ENCODE measurements at regions of chr11 and their contacts with region 1.

Region 1: DNA sequence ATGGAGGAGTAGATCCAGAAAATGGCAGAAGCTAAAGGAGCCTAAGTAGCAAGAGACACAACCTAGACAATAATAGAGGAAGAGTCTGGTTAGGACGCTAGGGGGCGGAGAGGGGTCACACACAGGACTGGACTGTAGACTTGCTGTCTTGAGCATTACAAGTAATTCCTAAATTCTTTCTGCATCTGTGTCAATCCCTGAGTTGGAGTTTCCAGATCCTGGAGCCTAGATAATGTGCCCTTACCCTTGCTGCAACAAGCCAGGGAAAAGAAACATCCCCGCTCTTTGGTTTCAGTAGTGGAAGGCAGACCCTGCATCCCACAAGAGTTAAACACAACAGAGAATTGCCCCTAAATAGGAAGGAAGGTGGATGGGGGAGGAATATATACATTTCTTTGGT is 14.9 kb upstream of the CCDC73 start:
- DNase-seq: peak; percentile 84
- ATAC-seq: peak; percentile 100
- H3K4me3 ChIP-seq: no peak overlapping the region
- H3K27ac ChIP-seq: no peak overlapping the region
- H3K4me1 ChIP-seq: no peaks in the 10 kb centered on the region; the same call in 1 of the 2 replicates
- H3K27me3 ChIP-seq: no peaks in the 10 kb centered on the region
- CTCF ChIP-seq: peak; percentile 89

Region 2: GRCh38 chr11:32858731-32859130 is 49.4 kb after region 1 on chr11:
- CTCF ChIA-PET with region 1: no interaction called
- POLR2A ChIA-PET with region 1: no interaction called
- intact Hi-C with region 1: loop called (anchors 5 kb)
- DNase-seq: peak; percentile 16
- ATAC-seq: no peak
- H3K4me3 ChIP-seq: no peak overlapping the region
- H3K27ac ChIP-seq: no peak overlapping the region
- H3K4me1 ChIP-seq: no peaks in the 10 kb centered on the region
- H3K27me3 ChIP-seq: no peaks in the 10 kb centered on the region
- CTCF ChIP-seq: peak; percentile 42

Region 3: GRCh38 chr11:32893343-32894148 is 84.2 kb after region 1 on chr11:
- CTCF ChIA-PET with region 1: no interaction called
- POLR2A ChIA-PET with region 1: no interaction called
- intact Hi-C with region 1: loop called (anchors 1 kb)
- DNase-seq: peak; percentile 32
- ATAC-seq: peak; percentile 37
- H3K4me3 ChIP-seq: peak overlapping the region; percentile 80
- H3K27ac ChIP-seq: peak overlapping the region; percentile 64
- H3K4me1 ChIP-seq: peaks cover 28% of the 10 kb centered on the region
- H3K27me3 ChIP-seq: no peaks in the 10 kb centered on the region
- CTCF ChIP-seq: peak; percentile 57

Region 4: GRCh38 chr11:32939046-32939445 is 129.7 kb after region 1 on chr11:
- CTCF ChIA-PET with region 1: no interaction called
- POLR2A ChIA-PET with region 1: no interaction called
- intact Hi-C with region 1: loop called (anchors 10 kb)
- DNase-seq: no peak
- ATAC-seq: no peak
- H3K4me3 ChIP-seq: no peak overlapping the region
- H3K27ac ChIP-seq: no peak overlapping the region
- H3K4me1 ChIP-seq: no peaks in the 10 kb centered on the region
- H3K27me3 ChIP-seq: no peaks in the 10 kb centered on the region
- CTCF ChIP-seq: no peak

Region 5: GRCh38 chr11:32960553-32961164 is 151.3 kb after region 1 on chr11:
- CTCF ChIA-PET with region 1: no interaction called
- POLR2A ChIA-PET with region 1: no interaction called
- intact Hi-C with region 1: loop called (anchors 5 kb)
- DNase-seq: peak; percentile 69
- ATAC-seq: 0 out of 2 replicates have a peak, but pooled peaks have one; percentile 38
- H3K4me3 ChIP-seq: no peak overlapping the region
- H3K27ac ChIP-seq: no peak overlapping the region
- H3K4me1 ChIP-seq: no peaks in the 10 kb centered on the region
- H3K27me3 ChIP-seq: no peaks in the 10 kb centered on the region
- CTCF ChIP-seq: peak; percentile 73

Measured in PC-3 (cell line).